Activated CD4-positive, alpha-beta T cell treated with anti-CD3 and anti-CD28 coated beads, Interleukin-2, amount 10 ng/mL, durations not matched to agents 7 days and 5 days (primary cell): ENCODE measurements at regions of chr4 and their contacts with region 1.

Region 1: GRCh38 chr4:40205259-40206198 is 8.7 kb downstream of the RHOH start:
- DNase-seq: peak; percentile 56
- H3K4me3 Mint-ChIP-seq: peak overlapping the region; percentile 94
- H3K27ac Mint-ChIP-seq: peak overlapping the region; percentile 98
- H3K4me1 Mint-ChIP-seq: peaks cover 72% of the 10 kb centered on the region
- H3K27me3 Mint-ChIP-seq: no peaks in the 10 kb centered on the region

Region 2: DNA sequence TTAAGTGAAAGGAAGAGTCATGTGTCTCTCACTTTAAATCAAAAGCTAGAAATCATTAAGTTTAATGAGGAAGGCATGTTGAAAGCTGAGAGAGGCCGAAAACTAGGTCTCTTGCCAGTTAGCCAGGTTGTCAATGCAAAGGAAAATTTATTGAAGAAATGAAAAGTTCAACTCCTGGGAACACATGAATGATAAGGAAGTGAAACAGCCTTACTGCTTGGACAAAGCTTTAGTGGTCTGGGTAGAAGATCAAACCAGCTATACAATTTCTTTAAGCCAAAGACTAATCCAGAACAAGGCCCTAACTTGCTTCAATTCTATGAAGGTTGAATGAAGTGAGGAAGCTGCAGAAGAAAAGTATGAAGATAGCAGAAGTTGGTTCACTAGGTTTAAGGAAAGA is 16.2 kb after region 1 on chr4:
- CTCF ChIA-PET with region 1: interaction called, 12 read pairs
- POLR2A ChIA-PET with region 1: interaction called, 7 read pairs
- DNase-seq: no peak
- H3K4me3 Mint-ChIP-seq: no peak overlapping the region
- H3K27ac Mint-ChIP-seq: no peak overlapping the region
- H3K4me1 Mint-ChIP-seq: peaks cover 87% of the 10 kb centered on the region
- H3K27me3 Mint-ChIP-seq: no peaks in the 10 kb centered on the region

Region 3: DNA sequence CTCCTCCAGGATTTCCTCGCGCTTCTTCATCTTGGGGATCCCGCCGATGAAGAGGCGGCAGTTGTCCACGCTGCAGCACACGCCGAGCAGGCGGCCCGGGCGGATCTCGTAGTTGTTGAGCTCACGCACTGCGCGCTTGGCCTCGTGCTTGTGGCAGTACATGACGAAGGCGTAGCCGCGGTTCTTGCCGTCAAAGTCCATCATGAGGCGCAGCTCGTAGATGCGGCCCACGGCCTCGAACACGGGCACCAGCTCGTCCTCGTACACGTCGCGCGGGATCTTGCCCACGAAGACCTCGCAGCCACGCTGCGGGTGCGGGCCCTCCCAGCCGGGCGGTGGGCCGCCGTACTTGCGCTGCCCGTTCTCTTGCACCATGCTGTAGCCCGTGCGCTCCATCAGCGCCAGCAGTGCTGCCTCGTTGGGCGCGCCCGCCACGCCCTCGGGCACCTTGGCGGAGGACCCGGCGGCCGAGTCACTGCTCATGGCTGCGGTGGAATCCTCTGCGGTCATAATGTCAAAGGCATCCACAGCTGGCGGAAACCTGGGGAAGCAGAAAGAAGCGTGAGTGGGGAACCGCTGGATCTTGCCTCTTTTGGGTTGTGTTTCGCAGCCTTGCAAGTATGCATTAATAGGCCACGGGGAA is 233.0 kb after region 1 on chr4:
- CTCF ChIA-PET with region 1: no interaction called
- POLR2A ChIA-PET with region 1: no interaction called
- DNase-seq: no peak
- H3K4me3 Mint-ChIP-seq: no peak overlapping the region
- H3K27ac Mint-ChIP-seq: peak overlapping the region; percentile 54
- H3K4me1 Mint-ChIP-seq: peaks cover 68% of the 10 kb centered on the region
- H3K27me3 Mint-ChIP-seq: no peaks in the 10 kb centered on the region